SK-N-SH (cell line): ENCODE measurements at regions of chr11 and their contacts with region 1.

Region 1: GRCh38 chr11:73350908-73351636 is 25.1 kb upstream of the RELT start:
- DNase-seq: peak; percentile 90
- H3K4me3 ChIP-seq: no peak overlapping the region; a peak in 1 of 4 replicates
- H3K27ac ChIP-seq: no peak overlapping the region
- H3K4me1 ChIP-seq: no peaks in the 10 kb centered on the region; a peak in 1 of 4 replicates
- H3K27me3 ChIP-seq: no peaks in the 10 kb centered on the region
- CTCF ChIP-seq: peak; percentile 99
- EP300 ChIP-seq: no peak
- RAD21 ChIP-seq: peak; percentile 79

Region 2: GRCh38 chr11:73295231-73295995 is 55.7 kb before region 1 on chr11:
- CTCF ChIA-PET with region 1: interaction called, 24 read pairs
- POLR2A ChIA-PET with region 1: no interaction called
- DNase-seq: peak; percentile 77
- H3K4me3 ChIP-seq: peak overlapping the region in 1 of 2 experiments; percentile 35; a peak in 1 of 4 replicates
- H3K27ac ChIP-seq: peak overlapping the region in 1 of 2 experiments; percentile 25; a peak in 2 of 4 replicates
- H3K4me1 ChIP-seq: peaks cover 0 to 4% of the 10 kb centered on the region in 2 experiments; a peak in 1 of 4 replicates
- H3K27me3 ChIP-seq: no peaks in the 10 kb centered on the region
- CTCF ChIP-seq: peak; percentile 97
- EP300 ChIP-seq: no peak
- RAD21 ChIP-seq: peak; percentile 64

Region 3: DNA sequence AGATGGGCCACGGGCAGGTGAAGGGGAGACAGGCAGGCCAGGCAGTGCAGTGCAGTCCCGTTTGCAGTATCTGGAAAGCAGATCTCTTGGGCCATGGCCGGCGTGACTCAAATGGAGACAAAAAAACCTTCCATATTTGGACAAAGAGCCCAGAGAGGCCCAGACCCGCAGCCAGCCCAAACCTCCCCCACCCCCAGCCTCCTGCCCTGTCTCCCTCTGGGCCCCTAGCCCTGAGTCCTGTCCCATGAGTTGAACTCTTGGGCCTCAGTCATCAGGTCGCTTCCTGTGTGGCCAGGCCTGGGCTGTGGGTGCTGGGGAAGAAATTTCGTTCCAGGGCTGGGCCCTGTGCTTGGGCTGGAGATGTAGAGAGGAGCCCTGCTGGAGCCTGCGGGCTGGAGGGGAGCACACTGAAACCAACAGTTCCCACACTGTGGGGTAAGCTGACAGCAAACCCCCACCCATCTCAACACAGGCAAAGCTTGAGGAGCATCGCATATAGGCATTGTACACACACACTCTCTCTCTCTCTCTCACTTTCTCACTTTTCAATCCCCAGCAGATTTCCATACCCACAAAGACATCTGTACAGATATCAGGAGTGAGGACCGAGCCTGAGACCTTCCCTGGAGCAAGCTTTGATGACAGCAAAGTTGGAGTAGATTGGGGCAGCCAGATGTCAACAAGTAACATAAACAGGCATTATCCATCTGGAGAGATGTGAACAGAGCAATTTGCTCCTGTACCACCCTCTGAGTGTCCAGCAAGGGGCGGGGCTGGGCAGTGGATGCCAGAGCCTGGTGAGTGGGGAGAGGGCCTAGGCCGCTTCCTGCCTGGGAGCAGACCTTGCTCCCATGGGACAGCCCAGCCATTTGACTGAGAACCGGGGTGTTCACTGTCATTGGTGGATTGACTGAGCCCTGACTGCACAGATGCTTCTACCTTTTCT is 25.8 kb before region 1 on chr11:
- CTCF ChIA-PET with region 1: interaction called, 12 read pairs
- POLR2A ChIA-PET with region 1: no interaction called
- DNase-seq: peak; percentile 84
- H3K4me3 ChIP-seq: no peak overlapping the region; a peak in 1 of 4 replicates
- H3K27ac ChIP-seq: peak overlapping the region; percentile 92 to 98
- H3K4me1 ChIP-seq: peaks cover 77 to 81% of the 10 kb centered on the region in 2 experiments
- H3K27me3 ChIP-seq: no peaks in the 10 kb centered on the region
- CTCF ChIP-seq: no peak
- EP300 ChIP-seq: peak in 1 of 2 experiments; percentile 62; a peak in 1 of 4 replicates
- RAD21 ChIP-seq: no peak

Region 4: DNA sequence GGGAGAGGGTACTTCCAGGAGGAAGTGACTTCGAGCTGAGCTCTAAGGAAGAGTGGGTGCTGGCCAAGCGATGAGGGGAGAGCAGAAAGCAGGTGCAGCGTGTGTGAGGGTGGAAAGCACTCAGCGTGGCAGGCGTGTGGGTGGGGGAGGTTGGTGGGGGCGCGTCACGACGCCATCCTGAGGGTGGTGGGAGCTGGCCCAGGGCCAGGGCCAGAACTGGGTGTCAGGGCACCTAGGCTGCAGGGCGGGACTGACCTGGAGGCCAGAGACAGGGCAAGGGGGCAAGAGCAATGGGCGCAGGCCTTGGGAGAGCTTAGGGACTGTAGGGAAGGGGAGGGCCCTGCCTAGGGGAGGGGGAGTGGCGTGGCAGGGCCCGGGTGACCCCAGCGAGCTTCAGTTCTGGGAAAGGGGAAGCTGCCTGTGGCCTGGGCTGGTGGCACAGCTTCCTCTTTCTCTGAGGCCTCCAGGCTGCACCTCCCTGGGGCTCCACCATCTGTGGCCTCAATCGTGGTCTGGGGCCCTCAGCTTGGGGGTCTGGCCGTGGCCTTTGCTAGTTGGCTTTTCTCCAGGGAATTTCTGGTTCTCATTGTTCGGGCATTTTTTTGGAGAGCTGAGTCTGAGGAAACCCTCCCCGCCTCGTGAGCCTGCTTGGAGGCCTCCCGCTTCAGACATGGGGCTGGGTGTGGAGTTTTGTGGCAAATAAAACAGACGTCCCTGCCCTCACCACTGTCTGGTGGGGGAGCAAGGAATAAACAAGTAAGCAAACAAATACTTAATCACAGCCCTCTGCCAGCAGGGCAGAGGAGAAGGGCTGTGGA is 34.0 kb after region 1 on chr11:
- CTCF ChIA-PET with region 1: interaction called, 313 read pairs
- POLR2A ChIA-PET with region 1: no interaction called
- DNase-seq: no peak
- H3K4me3 ChIP-seq: no peak overlapping the region
- H3K27ac ChIP-seq: no peak overlapping the region
- H3K4me1 ChIP-seq: peaks cover 15 to 24% of the 10 kb centered on the region in 2 experiments; a peak in 2 of 4 replicates
- H3K27me3 ChIP-seq: no peaks in the 10 kb centered on the region
- CTCF ChIP-seq: no peak
- EP300 ChIP-seq: no peak
- RAD21 ChIP-seq: no peak

Region 5: DNA sequence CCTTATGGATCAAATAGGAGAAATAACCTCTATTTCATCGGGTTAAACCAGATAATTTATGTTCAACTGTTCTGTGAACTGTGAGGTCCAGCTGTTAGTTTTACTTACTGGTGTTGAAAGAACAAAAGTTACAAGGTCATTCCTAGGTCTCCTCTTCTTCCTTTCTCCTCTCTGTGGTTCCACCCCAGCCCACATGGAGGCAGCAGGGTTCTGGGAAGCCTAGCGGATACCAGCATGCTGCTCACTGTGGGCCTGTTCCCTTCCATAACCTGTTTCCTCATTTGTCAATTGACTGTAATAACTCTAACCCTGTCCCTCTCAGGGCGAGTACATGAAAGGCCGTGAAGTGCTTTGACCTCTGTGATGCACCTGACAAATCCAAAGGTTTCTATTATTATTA is 53.0 kb after region 1 on chr11:
- CTCF ChIA-PET with region 1: interaction called, 47 read pairs
- POLR2A ChIA-PET with region 1: no interaction called
- DNase-seq: peak; percentile 84
- H3K4me3 ChIP-seq: no peak overlapping the region
- H3K27ac ChIP-seq: no peak overlapping the region
- H3K4me1 ChIP-seq: no peaks in the 10 kb centered on the region
- H3K27me3 ChIP-seq: no peaks in the 10 kb centered on the region
- CTCF ChIP-seq: peak; percentile 81
- EP300 ChIP-seq: no peak
- RAD21 ChIP-seq: peak; percentile 94

Region 6: DNA sequence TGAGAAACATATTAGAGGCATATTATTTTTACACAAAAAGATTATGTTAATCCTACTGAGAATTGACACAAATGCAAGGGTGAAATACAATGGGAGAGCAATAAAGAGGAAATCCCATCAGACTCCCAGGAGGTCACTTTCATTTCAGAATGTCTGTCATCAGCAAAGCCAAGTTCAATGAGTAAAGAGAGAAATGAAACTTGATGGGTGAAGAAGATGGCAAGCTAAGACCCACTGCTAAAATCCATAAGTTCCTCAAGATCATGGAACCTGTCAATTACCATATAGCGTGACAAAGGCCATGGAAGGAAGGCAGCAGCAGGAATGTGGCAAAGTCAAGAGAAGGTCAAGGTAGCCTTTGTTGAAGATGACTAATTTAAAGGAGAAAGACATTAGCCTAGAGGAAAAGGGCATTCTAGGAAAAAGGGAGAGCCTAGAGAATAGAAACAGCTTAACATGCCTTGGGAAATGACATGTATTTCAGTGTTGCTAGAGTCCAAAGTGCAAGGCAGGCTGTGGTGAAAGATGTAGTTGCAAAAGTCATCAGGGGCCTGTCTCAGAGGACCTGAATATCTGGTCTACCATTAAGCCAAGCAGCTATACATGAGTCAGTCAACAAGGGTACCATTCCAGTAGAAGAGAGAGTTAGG is 203.7 kb after region 1 on chr11:
- CTCF ChIA-PET with region 1: no interaction called
- POLR2A ChIA-PET with region 1: no interaction called
- DNase-seq: no peak
- H3K4me3 ChIP-seq: no peak overlapping the region
- H3K27ac ChIP-seq: no peak overlapping the region
- H3K4me1 ChIP-seq: peaks cover 0 to 2% of the 10 kb centered on the region in 2 experiments; a peak in 3 of 4 replicates
- H3K27me3 ChIP-seq: no peaks in the 10 kb centered on the region
- CTCF ChIP-seq: no peak
- EP300 ChIP-seq: no peak
- RAD21 ChIP-seq: no peak